ENCODE measurements at regions of chr4 and their contacts with region 1.

Region 1: GRCh38 chr4:165207431-165208220 is at the start of gene KLHL2:
- DNase-seq: peak; percentile 91
- ATAC-seq: peak; percentile 98
- total RNA-seq, gene KLHL2: 7.3 TPM

Region 2: DNA sequence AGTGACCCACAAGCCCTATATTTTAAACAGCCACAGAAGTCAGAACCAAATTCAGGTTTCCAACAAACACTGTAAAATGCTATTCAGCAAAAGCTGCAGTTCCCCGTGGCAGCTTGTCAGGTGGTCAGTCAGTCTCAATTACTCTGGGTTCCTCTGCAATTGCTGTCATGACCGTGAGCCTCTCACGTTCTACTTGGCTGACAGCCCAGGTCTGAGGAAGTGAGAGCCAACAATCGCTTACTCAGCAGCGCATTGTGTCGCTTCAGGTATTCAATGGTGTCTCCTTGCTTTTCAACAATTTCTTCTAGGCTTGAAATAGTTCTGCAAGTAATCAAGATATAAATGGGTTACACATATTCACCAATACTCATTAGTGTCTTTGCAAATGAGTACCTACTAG is 128.2 kb before region 1 on chr4:
- intact Hi-C with region 1: no loop called
- DNase-seq: peak; percentile 55
- ATAC-seq: peak; percentile 91

Region 3: GRCh38 chr4:165327211-165328100 is 119.8 kb after region 1 on chr4 and contains the start of gene MSMO1:
- intact Hi-C with region 1: loop called (anchors 10 kb)
- DNase-seq: peak; percentile 100
- ATAC-seq: peak; percentile 100
- total RNA-seq, gene MSMO1: 6.2 TPM